ENCODE measurements at regions of chr1 and their contacts with region 1.

Region 1: DNA sequence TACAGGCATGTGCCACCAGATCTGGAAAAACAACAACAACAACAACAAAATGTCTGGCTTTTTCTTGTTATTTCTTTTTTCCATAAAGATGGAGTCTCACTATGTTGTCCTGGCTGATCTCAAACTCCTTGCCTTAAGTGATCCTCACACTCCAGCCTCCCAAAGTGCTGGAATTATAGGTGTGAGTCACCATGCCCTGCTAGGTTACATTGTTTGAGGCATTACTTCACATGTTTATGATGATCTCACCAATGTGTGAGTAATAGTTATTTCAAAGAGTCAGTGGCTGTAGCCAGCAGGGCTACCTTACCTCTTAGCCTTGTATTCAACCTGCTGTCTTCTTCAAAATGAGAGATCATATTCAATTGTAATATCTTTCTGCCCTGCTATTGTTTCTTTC is 445.7 kb downstream of the AMY1C start:
- DNase-seq: peak; percentile 3
- H3K4me3 Mint-ChIP-seq: no peak overlapping the region
- H3K27ac Mint-ChIP-seq: no peak overlapping the region
- H3K4me1 Mint-ChIP-seq: no peaks in the 10 kb centered on the region
- H3K27me3 Mint-ChIP-seq: no peaks in the 10 kb centered on the region
- CTCF ChIP-seq: no peak

Region 2: DNA sequence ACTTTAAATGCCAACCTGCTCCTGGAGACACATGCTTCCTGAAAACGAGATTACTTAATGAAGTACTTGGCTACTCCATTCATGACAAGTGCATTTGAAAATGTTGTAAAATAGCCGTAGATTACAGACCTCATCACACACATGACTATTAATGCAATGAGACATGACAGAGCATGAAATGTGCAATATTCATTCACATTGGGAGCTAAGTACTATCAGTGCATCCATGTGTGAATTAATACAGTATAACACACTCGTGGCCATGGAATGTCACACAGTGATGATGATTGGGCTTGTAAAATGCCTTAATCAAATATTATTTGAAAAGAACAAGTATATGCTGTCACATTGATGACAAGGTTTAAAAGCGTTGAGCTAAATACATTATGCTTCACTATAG is 38.7 kb before region 1 on chr1:
- CTCF ChIA-PET with region 1: interaction called, 10 read pairs
- intact Hi-C with region 1: no loop called
- DNase-seq: no peak
- H3K4me3 Mint-ChIP-seq: no peak overlapping the region
- H3K27ac Mint-ChIP-seq: no peak overlapping the region
- H3K4me1 Mint-ChIP-seq: no peaks in the 10 kb centered on the region
- H3K27me3 Mint-ChIP-seq: no peaks in the 10 kb centered on the region
- CTCF ChIP-seq: no peak